ENCODE measurements at regions of chr6 and their contacts with region 1.

Region 1: DNA sequence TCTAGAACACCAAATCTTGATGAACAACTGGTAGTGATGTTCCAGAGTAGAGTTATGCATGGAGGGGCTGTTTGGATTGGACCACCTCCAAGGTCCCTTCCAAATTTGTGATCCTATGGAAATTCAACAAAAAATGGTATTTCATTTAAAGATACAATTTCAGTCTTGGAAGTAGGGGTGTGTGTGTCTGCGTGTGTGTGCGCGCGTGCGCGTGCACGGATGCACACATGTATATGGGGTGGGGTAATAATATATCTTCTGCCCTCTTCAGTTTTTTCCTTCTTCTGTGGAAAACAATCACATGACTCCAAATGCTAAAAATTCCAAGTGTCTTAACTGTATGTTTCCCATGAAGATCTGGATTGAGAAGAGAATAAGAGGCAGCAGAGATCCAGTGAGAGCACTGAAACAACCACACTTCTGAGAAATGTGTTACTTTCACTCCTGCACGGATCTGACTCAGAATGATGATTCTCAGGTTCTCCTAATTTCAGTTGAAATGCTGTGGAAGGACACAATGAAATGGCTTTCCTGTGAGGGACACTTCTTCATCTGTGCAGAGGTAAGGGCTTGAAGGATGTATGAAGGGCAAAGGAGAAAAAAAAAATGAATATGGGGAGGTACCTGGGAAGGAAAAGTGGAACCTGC is 10.6 kb upstream of the IL17F start:
- DNase-seq: no peak
- H3K4me3 ChIP-seq: no peak overlapping the region
- H3K27ac ChIP-seq: no peak overlapping the region
- H3K4me1 ChIP-seq: no peaks in the 10 kb centered on the region
- H3K27me3 ChIP-seq: no peaks in the 10 kb centered on the region
- CTCF ChIP-seq: no peak

Region 2: DNA sequence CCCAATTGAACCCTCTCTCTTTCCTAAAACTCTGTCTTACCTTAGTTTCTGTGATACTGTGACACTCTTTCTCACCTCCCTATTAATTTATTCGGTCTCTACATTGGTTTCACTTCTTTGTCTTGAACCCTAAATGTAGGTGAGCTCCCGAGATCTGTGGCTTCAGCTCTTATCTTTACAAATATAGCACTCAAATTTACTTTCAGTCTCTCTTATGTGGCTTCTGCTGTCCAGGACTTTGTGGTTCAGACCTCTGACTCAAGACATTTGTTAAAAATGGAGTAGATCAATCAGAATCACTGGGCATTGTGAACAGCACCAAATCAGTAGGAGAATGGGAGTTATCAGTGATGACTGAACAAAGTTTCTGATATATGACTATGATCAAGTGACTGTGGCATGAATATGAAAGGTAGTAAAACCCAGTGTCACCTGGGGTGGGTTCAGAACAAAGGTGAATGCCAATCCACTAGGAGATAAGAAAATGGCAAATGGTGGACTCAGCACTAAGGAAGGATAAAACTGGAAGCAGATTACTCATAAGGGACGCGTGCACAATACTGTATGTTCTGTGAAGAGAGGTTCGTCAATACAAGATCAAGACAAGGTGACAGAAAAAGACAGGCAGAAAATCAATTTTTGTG is 37.8 kb before region 1 on chr6:
- CTCF ChIA-PET with region 1: no interaction called
- dilution Hi-C with region 1: loop called (anchors 5 kb)
- in situ Hi-C with region 1: no loop called
- intact Hi-C with region 1: no loop called
- DNase-seq: no peak
- H3K4me3 ChIP-seq: no peak overlapping the region
- H3K27ac ChIP-seq: no peak overlapping the region
- H3K4me1 ChIP-seq: no peaks in the 10 kb centered on the region
- H3K27me3 ChIP-seq: peaks cover 2% of the 10 kb centered on the region
- CTCF ChIP-seq: no peak